Common myeloid progenitor, CD34-positive (primary cell): ENCODE measurements at regions of chr19 and their contacts with region 1.

Region 1: GRCh38 chr19:47494729-47495128 is 10.7 kb upstream of the KPTN start:
- DNase-seq: peak in 1 of 3 donors; percentile 46
- H3K4me3 ChIP-seq: peak overlapping the region in 1 of 7 experiments; percentile 19
- H3K27ac ChIP-seq: peak overlapping the region in 1 of 2 experiments; percentile 60
- H3K4me1 ChIP-seq: peaks cover 4 to 61% (median 51%) of the 10 kb centered on the region in 4 experiments
- H3K27me3 ChIP-seq: no peaks in the 10 kb centered on the region

Region 2: GRCh38 chr19:47421844-47422395 is 72.8 kb before region 1 on chr19:
- CTCF ChIA-PET with region 1: no interaction called
- POLR2A ChIA-PET with region 1: no interaction called
- DNase-seq: peak in 1 of 3 donors; percentile 34
- H3K4me3 ChIP-seq: no peak overlapping the region
- H3K27ac ChIP-seq: no peak overlapping the region
- H3K4me1 ChIP-seq: peaks cover 0 to 19% (median 10%) of the 10 kb centered on the region in 4 experiments
- H3K27me3 ChIP-seq: peaks cover 13 to 95% (median 43%) of the 10 kb centered on the region in 5 experiments

Region 3: DNA sequence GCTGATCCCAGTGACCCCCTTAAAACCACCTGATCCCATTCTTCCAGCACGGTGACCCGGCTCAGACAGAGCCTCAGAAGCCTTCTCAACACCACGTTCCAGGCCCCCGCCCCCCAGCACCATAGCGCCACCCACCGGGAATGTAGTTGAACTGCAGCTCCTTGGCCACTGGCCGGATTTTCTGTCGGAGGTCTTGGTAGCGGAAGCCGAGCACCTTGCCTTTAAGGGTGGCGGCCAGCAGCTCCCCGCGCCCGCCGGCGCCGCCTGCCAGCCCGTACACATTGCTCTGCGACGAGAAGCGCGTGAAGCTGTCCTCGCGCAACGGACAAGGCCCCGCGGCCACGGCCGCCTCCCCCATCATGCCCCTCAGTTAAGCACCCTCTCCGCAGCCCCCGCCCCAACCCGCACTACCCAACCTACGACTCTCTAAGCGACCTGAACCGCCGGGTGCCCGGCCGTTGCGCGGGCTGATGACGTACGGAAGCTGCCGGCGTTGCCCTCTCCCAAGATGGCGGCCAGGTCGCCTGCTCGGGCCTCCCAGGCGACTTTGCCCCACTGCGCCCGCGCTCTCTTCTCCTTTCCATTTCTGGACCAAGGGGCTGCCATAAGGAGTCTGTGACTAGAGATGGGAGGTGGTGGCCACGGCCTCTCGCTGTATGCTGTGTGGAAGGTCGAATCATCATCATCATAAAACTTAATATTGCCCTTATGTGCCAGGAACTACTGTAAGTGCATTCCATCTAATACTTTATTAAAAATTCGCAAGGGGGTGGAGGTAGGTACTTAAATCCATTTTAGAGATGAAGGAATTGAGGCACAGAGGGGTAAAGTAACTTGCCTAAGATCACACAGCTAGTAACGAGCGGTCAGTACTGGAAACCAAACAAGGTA is 10.7 kb before region 1 on chr19 and contains the start of gene KPTN:
- CTCF ChIA-PET with region 1: interaction called, 12 read pairs
- POLR2A ChIA-PET with region 1: interaction called, 5 read pairs
- DNase-seq: peak; percentile 95 to 96 (median 96)
- H3K4me3 ChIP-seq: peak within 1 kb of the TSS; percentile 71 to 95 (median 82)
- H3K27ac ChIP-seq: peak within 1 kb of the TSS; percentile 72 to 91
- H3K4me1 ChIP-seq: peaks cover 11 to 52% (median 51%) of the 10 kb centered on the region in 4 experiments
- H3K27me3 ChIP-seq: no peaks in the 10 kb centered on the region

Region 4: GRCh38 chr19:47507012-47507411 is 12.3 kb after region 1 on chr19:
- CTCF ChIA-PET with region 1: interaction called, 23 read pairs
- POLR2A ChIA-PET with region 1: no interaction called
- DNase-seq: no peak
- H3K4me3 ChIP-seq: peak overlapping the region in 2 of 7 experiments; percentile 23 to 32
- H3K27ac ChIP-seq: peak overlapping the region; percentile 2 to 50
- H3K4me1 ChIP-seq: peaks cover 0 to 39% (median 30%) of the 10 kb centered on the region in 4 experiments
- H3K27me3 ChIP-seq: no peaks in the 10 kb centered on the region

Region 5: DNA sequence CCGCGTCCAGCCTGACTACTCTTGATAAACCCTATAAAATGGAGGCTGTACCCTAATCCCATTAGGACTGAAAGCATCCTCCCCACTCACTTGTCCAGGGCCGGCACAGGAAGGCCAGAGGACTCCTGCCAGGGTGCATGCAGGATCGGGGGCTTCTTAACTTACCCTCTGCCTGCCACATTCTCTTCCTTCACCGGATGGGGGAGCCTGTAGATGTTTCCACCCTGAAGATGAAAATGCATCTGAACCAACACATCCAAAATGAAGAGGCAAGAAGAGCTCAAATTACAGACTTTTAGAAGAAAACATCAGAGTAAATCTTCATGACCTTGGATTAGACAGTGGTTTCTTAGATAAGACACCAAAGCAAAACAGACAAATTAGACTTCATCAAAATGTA is 46.0 kb after region 1 on chr19:
- CTCF ChIA-PET with region 1: no interaction called
- POLR2A ChIA-PET with region 1: no interaction called
- DNase-seq: peak in 1 of 3 donors; percentile 23
- H3K4me3 ChIP-seq: no peak overlapping the region
- H3K27ac ChIP-seq: no peak overlapping the region
- H3K4me1 ChIP-seq: peaks cover 0 to 10% (median 8%) of the 10 kb centered on the region in 4 experiments
- H3K27me3 ChIP-seq: peaks cover 0 to 24% (median 9%) of the 10 kb centered on the region in 5 experiments

Region 6: GRCh38 chr19:48064509-48064908 is 569.8 kb after region 1 on chr19:
- CTCF ChIA-PET with region 1: no interaction called
- POLR2A ChIA-PET with region 1: no interaction called
- DNase-seq: no peak
- H3K4me3 ChIP-seq: no peak overlapping the region
- H3K27ac ChIP-seq: no peak overlapping the region
- H3K4me1 ChIP-seq: no peaks in the 10 kb centered on the region
- H3K27me3 ChIP-seq: peaks cover 0 to 11% (median 7%) of the 10 kb centered on the region in 5 experiments